Activated CD4-positive, alpha-beta T cell treated with anti-CD3 and anti-CD28 coated beads, Interleukin-2, amount 10 ng/mL, durations not matched to agents 24 days and 14 days (primary cell): ENCODE measurements at regions of chr1 and their contacts with region 1.

Region 1: DNA sequence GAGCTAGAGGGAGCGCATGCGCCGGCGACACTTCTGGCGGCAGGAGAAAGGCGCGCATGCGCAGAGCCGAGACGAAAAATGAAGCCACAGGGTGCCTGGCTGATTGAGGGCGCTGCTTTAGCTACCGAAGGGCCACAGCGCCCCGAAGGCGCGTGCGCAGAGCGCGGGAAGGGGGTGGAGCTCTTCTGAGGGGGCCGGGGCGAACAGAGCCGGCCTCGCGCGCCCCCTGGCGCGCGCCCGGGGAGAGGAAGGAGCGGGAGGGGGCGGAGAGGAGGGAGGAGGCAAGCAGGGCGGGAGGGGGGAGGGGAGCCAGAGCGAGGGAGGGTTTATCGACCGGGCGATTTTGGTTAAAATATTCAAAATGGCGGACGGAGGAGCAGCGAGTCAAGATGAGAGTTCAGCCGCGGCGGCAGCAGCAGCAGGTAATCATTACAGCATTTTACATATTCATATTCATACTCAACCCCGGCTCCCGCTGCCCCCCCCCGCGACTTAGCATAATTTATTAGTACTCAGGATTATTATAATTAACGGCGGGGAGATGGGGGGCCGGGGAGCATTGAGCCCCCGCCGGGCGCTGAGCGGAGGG is at the start of gene POU2F1:
- DNase-seq: peak; percentile 99
- H3K4me3 Mint-ChIP-seq: peak within 1 kb of the TSS; percentile 98
- H3K27ac Mint-ChIP-seq: peak within 1 kb of the TSS; percentile 99
- H3K4me1 Mint-ChIP-seq: peaks cover 37% of the 10 kb centered on the region
- H3K27me3 Mint-ChIP-seq: peaks cover 2% of the 10 kb centered on the region
- total RNA-seq, gene POU2F1: 17.2 and 17.5 TPM in 2 replicates

Region 2: GRCh38 chr1:166875734-166876539 is 344.7 kb before region 1 on chr1 and contains the start of gene TADA1:
- intact Hi-C with region 1: loop called (anchors 1 kb)
- DNase-seq: peak; percentile 99
- H3K4me3 Mint-ChIP-seq: peak within 1 kb of the TSS; percentile 91
- H3K27ac Mint-ChIP-seq: peak within 1 kb of the TSS; percentile 100
- H3K4me1 Mint-ChIP-seq: peaks cover 46% of the 10 kb centered on the region
- H3K27me3 Mint-ChIP-seq: peaks cover 7% of the 10 kb centered on the region
- total RNA-seq, gene TADA1: 17.0 and 18.4 TPM in 2 replicates

Region 3: GRCh38 chr1:167104256-167104633 is 116.4 kb before region 1 on chr1:
- intact Hi-C with region 1: loop called (anchors 5 kb)
- DNase-seq: peak; percentile 67
- H3K4me3 Mint-ChIP-seq: peak overlapping the region; percentile 36
- H3K27ac Mint-ChIP-seq: peak overlapping the region; percentile 48
- H3K4me1 Mint-ChIP-seq: peaks cover 37% of the 10 kb centered on the region
- H3K27me3 Mint-ChIP-seq: peaks cover 5% of the 10 kb centered on the region

Region 4: GRCh38 chr1:167137332-167137781 is 83.3 kb before region 1 on chr1:
- intact Hi-C with region 1: no loop called
- DNase-seq: no peak
- H3K4me3 Mint-ChIP-seq: no peak overlapping the region
- H3K27ac Mint-ChIP-seq: no peak overlapping the region
- H3K4me1 Mint-ChIP-seq: no peaks in the 10 kb centered on the region
- H3K27me3 Mint-ChIP-seq: peaks cover 50% of the 10 kb centered on the region

Region 5: GRCh38 chr1:167447521-167448136 is 227.0 kb after region 1 on chr1:
- intact Hi-C with region 1: loop called (anchors 2 kb)
- DNase-seq: peak; percentile 92
- H3K4me3 Mint-ChIP-seq: peak overlapping the region; percentile 79
- H3K27ac Mint-ChIP-seq: peak overlapping the region; percentile 93
- H3K4me1 Mint-ChIP-seq: peaks cover 66% of the 10 kb centered on the region
- H3K27me3 Mint-ChIP-seq: no peaks in the 10 kb centered on the region

Region 6: DNA sequence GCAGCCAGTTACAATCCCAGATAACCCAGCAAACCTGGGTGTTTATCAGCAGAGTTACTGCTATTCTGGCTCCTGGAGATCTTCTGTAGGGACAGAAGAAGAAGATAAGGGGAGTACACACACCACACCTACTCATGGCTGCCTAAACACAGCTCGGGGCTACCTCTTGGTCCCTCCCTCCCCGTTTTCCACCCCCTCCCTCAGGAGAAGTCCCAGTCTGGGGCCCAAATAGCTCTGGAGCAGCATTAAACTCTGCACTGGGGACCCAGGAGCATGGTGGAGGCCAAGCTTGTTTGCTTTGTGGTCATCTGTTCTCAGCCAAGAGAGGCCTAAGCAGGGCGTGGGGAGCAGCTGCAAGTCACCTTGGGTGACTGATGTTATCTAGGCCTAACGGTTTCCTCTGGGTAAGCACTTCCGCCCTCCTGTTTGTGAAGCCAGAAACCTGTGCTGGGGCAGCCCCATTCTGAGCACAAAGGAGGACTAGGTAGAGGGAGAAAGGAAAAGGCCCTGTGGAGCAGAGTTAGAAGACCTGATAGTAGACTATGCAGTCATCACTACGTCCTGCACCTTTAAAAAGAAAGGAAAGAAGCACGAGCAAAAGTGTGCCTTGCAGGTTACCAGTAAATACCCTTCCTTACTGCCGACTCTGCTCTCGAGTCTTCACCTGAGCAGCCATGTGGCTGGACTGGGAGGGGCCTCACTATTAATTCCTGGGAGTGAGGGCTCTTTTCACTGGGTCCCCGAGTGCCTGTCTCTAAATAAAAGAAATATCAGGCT is 407.4 kb after region 1 on chr1:
- intact Hi-C with region 1: loop called (anchors 2 kb)
- DNase-seq: peak; percentile 95
- H3K4me3 Mint-ChIP-seq: peak overlapping the region; percentile 94
- H3K27ac Mint-ChIP-seq: peak overlapping the region; percentile 92
- H3K4me1 Mint-ChIP-seq: peaks cover 57% of the 10 kb centered on the region
- H3K27me3 Mint-ChIP-seq: no peaks in the 10 kb centered on the region